GM12878 (cell line): ENCODE measurements at regions of chr15 and their contacts with region 1.

Region 1: GRCh38 chr15:90576711-90577389 is 47.1 kb downstream of the CRTC3 start:
- DNase-seq: no peak
- ATAC-seq: no peak
- H3K4me3 ChIP-seq: no peak overlapping the region
- H3K27ac ChIP-seq: no peak overlapping the region
- H3K4me1 ChIP-seq: peaks cover 16% of the 10 kb centered on the region; the same call in 1 of the 2 replicates
- H3K27me3 ChIP-seq: no peaks in the 10 kb centered on the region
- CTCF ChIP-seq: no peak
- EP300 ChIP-seq: no peak
- POLR2A ChIP-seq: no peak
- RAD21 ChIP-seq: no peak

Region 2: GRCh38 chr15:90451053-90451850 is 125.6 kb before region 1 on chr15:
- CTCF ChIA-PET with region 1: no interaction called
- POLR2A ChIA-PET with region 1: no interaction called
- RAD21 ChIA-PET with region 1: no interaction called
- SMC1A ChIA-PET with region 1: no interaction called
- in situ Hi-C with region 1: no loop called
- intact Hi-C with region 1: no loop called
- DNase-seq: no peak
- ATAC-seq: no peak
- H3K4me3 ChIP-seq: no peak overlapping the region
- H3K27ac ChIP-seq: no peak overlapping the region
- H3K4me1 ChIP-seq: no peaks in the 10 kb centered on the region
- H3K27me3 ChIP-seq: no peaks in the 10 kb centered on the region
- CTCF ChIP-seq: no peak
- EP300 ChIP-seq: no peak
- POLR2A ChIP-seq: no peak
- RAD21 ChIP-seq: no peak

Region 3: GRCh38 chr15:90564051-90564450 is 12.8 kb before region 1 on chr15:
- CTCF ChIA-PET with region 1: interaction called, 14 read pairs
- POLR2A ChIA-PET with region 1: interaction called, 17 read pairs
- RAD21 ChIA-PET with region 1: interaction called, 10 read pairs
- SMC1A ChIA-PET with region 1: interaction called, 32 read pairs
- in situ Hi-C with region 1: no loop called
- intact Hi-C with region 1: no loop called
- DNase-seq: no peak
- ATAC-seq: peak; percentile 61
- H3K4me3 ChIP-seq: peak overlapping the region; percentile 14; the same call in 1 of the 2 replicates
- H3K27ac ChIP-seq: peak overlapping the region; percentile 63
- H3K4me1 ChIP-seq: peaks cover 45% of the 10 kb centered on the region
- H3K27me3 ChIP-seq: no peaks in the 10 kb centered on the region
- CTCF ChIP-seq: no peak
- EP300 ChIP-seq: no peak
- POLR2A ChIP-seq: no peak
- RAD21 ChIP-seq: no peak